ENCODE measurements at regions of chr21 and their contacts with region 1.

Region 1: GRCh38 chr21:34073032-34073869 is at the starts of genes MRPS6 and SLC5A3:
- DNase-seq: peak; percentile 86
- ATAC-seq: peak; percentile 68
- H3K4me3 Mint-ChIP-seq: peak within 1 kb of the TSS; percentile 90
- H3K27ac Mint-ChIP-seq: peak within 1 kb of the TSS; percentile 78
- H3K4me1 Mint-ChIP-seq: peaks cover 39% of the 10 kb centered on the region
- H3K27me3 Mint-ChIP-seq: peaks cover 7% of the 10 kb centered on the region
- total RNA-seq, gene MRPS6: 75.7 to 77.2 TPM
- total RNA-seq, gene SLC5A3: 22.3 to 23.7 TPM

Region 2: GRCh38 chr21:33976082-33977016 is 96.9 kb before region 1 on chr21:
- POLR2A ChIA-PET with region 1: interaction called, 14 read pairs
- DNase-seq: peak; percentile 47
- ATAC-seq: peak; percentile 48
- H3K4me3 Mint-ChIP-seq: peak overlapping the region; percentile 75
- H3K27ac Mint-ChIP-seq: peak overlapping the region; percentile 90
- H3K4me1 Mint-ChIP-seq: peaks cover 58% of the 10 kb centered on the region
- H3K27me3 Mint-ChIP-seq: no peaks in the 10 kb centered on the region

Measured in activated naive CD8-positive, alpha-beta T cell treated with anti-CD3 and anti-CD28 coated beads, Interleukin-2, amount 10 ng/mL, durations not matched to agents 7 days and 5 days (primary cell).